ENCODE measurements at regions of chr2 and their contacts with region 1.

Region 1: GRCh38 chr2:171893824-171894611 is at the start of gene SLC25A12:
- DNase-seq: peak; percentile 53 to 79 (median 65)
- ATAC-seq: peak; percentile 96
- H3K4me3 ChIP-seq: peak within 1 kb of the TSS; percentile 93
- H3K4me3 Mint-ChIP-seq: peak within 1 kb of the TSS; percentile 93 to 98 (median 96)
- H3K27ac ChIP-seq: peak within 1 kb of the TSS; percentile 83
- H3K27ac Mint-ChIP-seq: peak within 1 kb of the TSS; percentile 66 to 94 (median 89)
- H3K4me1 ChIP-seq: peaks cover 11 to 17% of the 10 kb centered on the region in 2 donors
- H3K4me1 Mint-ChIP-seq: peaks cover 31 to 61% (median 52%) of the 10 kb centered on the region in 7 donors
- H3K27me3 ChIP-seq: no peaks in the 10 kb centered on the region
- H3K27me3 Mint-ChIP-seq: peaks cover 0 to 6% (median 0%) of the 10 kb centered on the region in 5 donors
- total RNA-seq, gene SLC25A12: 12.7 to 33.6 (median 14.0) TPM

Region 2: GRCh38 chr2:170155022-170155722 is 1738.8 kb before region 1 on chr2:
- CTCF ChIA-PET with region 1: no interaction called
- POLR2A ChIA-PET with region 1: no interaction called
- intact Hi-C with region 1: no loop called
- DNase-seq: no peak
- ATAC-seq: no peak
- H3K4me3 ChIP-seq: no peak overlapping the region
- H3K4me3 Mint-ChIP-seq: no peak overlapping the region
- H3K27ac ChIP-seq: no peak overlapping the region
- H3K27ac Mint-ChIP-seq: no peak overlapping the region
- H3K4me1 ChIP-seq: no peaks in the 10 kb centered on the region
- H3K4me1 Mint-ChIP-seq: no peaks in the 10 kb centered on the region
- H3K27me3 ChIP-seq: no peaks in the 10 kb centered on the region
- H3K27me3 Mint-ChIP-seq: peaks cover 0 to 12% (median 2%) of the 10 kb centered on the region in 5 donors

Region 3: DNA sequence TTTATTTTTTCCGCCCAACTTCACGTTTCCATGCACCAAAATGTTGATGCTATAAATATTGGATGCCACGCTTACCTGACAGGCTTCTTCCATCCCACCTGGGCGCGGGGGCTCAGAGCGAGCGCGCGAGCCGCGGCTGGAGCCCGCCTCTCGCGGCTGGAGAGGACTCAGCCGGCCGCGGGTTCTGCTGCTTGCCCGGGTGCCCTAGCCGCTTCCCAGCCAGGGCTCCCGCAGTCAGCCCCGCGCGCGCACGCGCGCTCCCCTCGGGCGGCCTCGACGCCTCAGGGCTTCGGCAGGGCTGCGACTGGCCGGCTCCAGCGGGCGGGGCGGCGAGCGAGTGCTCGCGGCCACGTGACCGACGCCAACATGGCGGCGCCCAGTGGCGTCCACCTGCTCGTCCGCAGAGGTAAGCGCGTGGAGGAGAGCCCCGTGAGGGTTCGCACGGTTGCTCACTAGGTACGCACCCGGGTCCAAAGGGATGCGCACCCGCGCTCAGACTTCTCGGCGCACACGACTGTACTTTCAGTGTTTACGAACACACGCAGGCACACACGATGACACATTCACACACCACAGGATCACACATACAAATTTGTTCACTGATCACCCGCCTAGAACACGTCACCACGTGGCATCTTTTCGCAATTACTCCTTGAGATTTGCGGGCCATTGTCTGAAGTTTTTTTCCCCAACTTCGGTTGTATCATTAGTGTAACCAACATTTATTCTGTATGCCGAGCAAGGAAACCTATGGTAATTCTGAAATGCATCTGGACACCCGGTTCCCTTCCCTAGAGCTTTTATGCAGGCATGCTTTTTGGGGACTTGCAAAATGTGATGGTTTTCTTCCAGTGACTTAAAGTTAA is 105.8 kb after region 1 on chr2 and contains the start of gene METAP1D:
- CTCF ChIA-PET with region 1: no interaction called
- POLR2A ChIA-PET with region 1: no interaction called
- intact Hi-C with region 1: loop called (anchors 1 to 2 kb)
- DNase-seq: peak; percentile 74 to 92 (median 82)
- ATAC-seq: peak; percentile 98
- H3K4me3 ChIP-seq: peak within 1 kb of the TSS; percentile 99
- H3K4me3 Mint-ChIP-seq: peak within 1 kb of the TSS; percentile 87 to 99 (median 96)
- H3K27ac ChIP-seq: peak within 1 kb of the TSS; percentile 61
- H3K27ac Mint-ChIP-seq: peak within 1 kb of the TSS; percentile 77 to 97 (median 93)
- H3K4me1 ChIP-seq: peaks cover 0 to 5% of the 10 kb centered on the region in 2 donors
- H3K4me1 Mint-ChIP-seq: peaks cover 5 to 24% (median 22%) of the 10 kb centered on the region in 7 donors
- H3K27me3 ChIP-seq: no peaks in the 10 kb centered on the region
- H3K27me3 Mint-ChIP-seq: peaks cover 6 to 23% (median 9%) of the 10 kb centered on the region in 5 donors
- total RNA-seq, gene METAP1D: 5.3 to 12.2 (median 11.6) TPM

Measured in naive thymus-derived CD4-positive, alpha-beta T cell (primary cell).